Naive thymus-derived CD4-positive, alpha-beta T cell (primary cell): ENCODE measurements at regions of chr7 and their contacts with region 1.

Region 1: DNA sequence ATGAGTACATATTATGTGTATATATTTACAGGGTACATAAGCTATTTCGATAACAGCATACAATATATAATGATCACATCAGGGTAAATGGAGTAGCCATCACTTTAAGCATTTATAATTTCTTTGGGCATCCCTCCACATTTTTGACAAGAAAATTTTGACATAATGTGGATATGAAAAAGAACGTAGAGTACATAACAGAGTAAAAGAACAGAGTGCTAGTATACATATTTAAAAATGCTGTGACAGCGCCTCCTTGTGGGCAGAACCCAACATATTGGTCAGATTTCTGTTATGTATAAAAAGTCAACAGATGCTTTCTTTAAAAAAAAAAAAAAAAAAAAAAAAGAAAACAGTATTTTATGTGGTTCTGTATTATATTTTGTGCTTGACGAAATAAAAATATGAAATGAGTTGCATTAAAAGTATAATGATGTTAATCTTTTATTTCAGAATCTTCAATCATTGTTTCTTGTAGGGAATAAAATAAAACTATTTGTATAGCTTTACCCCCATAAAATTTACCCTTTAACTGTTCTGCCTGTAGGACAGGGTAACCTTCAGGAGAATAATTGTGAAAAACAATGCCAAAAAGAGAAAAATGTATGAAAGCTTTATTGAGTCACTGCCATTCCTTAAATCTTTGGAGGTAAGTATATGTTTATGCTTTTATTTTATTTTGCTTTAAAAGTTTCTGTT is 18.3 kb upstream of the HBP1 start:
- DNase-seq: peak; percentile 45 to 79 (median 72)
- ATAC-seq: peak; percentile 88
- H3K4me3 ChIP-seq: no peak overlapping the region
- H3K4me3 Mint-ChIP-seq: no peak overlapping the region
- H3K27ac ChIP-seq: no peak overlapping the region
- H3K27ac Mint-ChIP-seq: no peak overlapping the region
- H3K4me1 ChIP-seq: no peaks in the 10 kb centered on the region
- H3K4me1 Mint-ChIP-seq: peaks cover 0 to 12% (median 4%) of the 10 kb centered on the region in 7 donors
- H3K27me3 ChIP-seq: no peaks in the 10 kb centered on the region
- H3K27me3 Mint-ChIP-seq: peaks cover 0 to 7% (median 3%) of the 10 kb centered on the region in 5 donors

Region 2: GRCh38 chr7:106176414-106177299 is 973.9 kb before region 1 on chr7:
- CTCF ChIA-PET with region 1: no interaction called
- POLR2A ChIA-PET with region 1: no interaction called
- intact Hi-C with region 1: loop called (anchors 2 to 5 kb)
- DNase-seq: peak; percentile 24 to 73 (median 57)
- ATAC-seq: peak; percentile 92
- H3K4me3 ChIP-seq: no peak overlapping the region
- H3K4me3 Mint-ChIP-seq: no peak overlapping the region
- H3K27ac ChIP-seq: no peak overlapping the region
- H3K27ac Mint-ChIP-seq: no peak overlapping the region
- H3K4me1 ChIP-seq: no peaks in the 10 kb centered on the region
- H3K4me1 Mint-ChIP-seq: peaks cover 0 to 5% (median 0%) of the 10 kb centered on the region in 7 donors
- H3K27me3 ChIP-seq: peaks cover 0 to 7% of the 10 kb centered on the region in 2 donors
- H3K27me3 Mint-ChIP-seq: peaks cover 9 to 22% (median 19%) of the 10 kb centered on the region in 5 donors

Region 3: GRCh38 chr7:106947244-106947728 is 203.2 kb before region 1 on chr7:
- CTCF ChIA-PET with region 1: interaction called, 16 read pairs
- POLR2A ChIA-PET with region 1: interaction called, 3 read pairs
- intact Hi-C with region 1: loop called in 1 of 2 experiments (anchors 1 kb)
- DNase-seq: peak in 7 of 9 donors; percentile 9 to 45 (median 31)
- ATAC-seq: peak; percentile 69
- H3K4me3 ChIP-seq: no peak overlapping the region
- H3K4me3 Mint-ChIP-seq: no peak overlapping the region
- H3K27ac ChIP-seq: no peak overlapping the region
- H3K27ac Mint-ChIP-seq: no peak overlapping the region
- H3K4me1 ChIP-seq: no peaks in the 10 kb centered on the region
- H3K4me1 Mint-ChIP-seq: peaks cover 0 to 4% (median 0%) of the 10 kb centered on the region in 7 donors
- H3K27me3 ChIP-seq: no peaks in the 10 kb centered on the region
- H3K27me3 Mint-ChIP-seq: peaks cover 0 to 13% (median 4%) of the 10 kb centered on the region in 5 donors

Region 4: GRCh38 chr7:107130487-107131225 is 19.9 kb before region 1 on chr7:
- CTCF ChIA-PET with region 1: interaction called, 4 read pairs
- POLR2A ChIA-PET with region 1: interaction called, 3 read pairs
- intact Hi-C with region 1: loop called in 1 of 2 experiments (anchors 2 kb)
- DNase-seq: no peak
- ATAC-seq: no peak
- H3K4me3 ChIP-seq: no peak overlapping the region
- H3K4me3 Mint-ChIP-seq: no peak overlapping the region
- H3K27ac ChIP-seq: no peak overlapping the region
- H3K27ac Mint-ChIP-seq: no peak overlapping the region
- H3K4me1 ChIP-seq: peaks cover 3 to 12% of the 10 kb centered on the region in 2 donors
- H3K4me1 Mint-ChIP-seq: peaks cover 8 to 23% (median 18%) of the 10 kb centered on the region in 7 donors
- H3K27me3 ChIP-seq: no peaks in the 10 kb centered on the region
- H3K27me3 Mint-ChIP-seq: peaks cover 0 to 10% (median 0%) of the 10 kb centered on the region in 5 donors

Region 5: GRCh38 chr7:107958764-107959526 is 808.4 kb after region 1 on chr7:
- CTCF ChIA-PET with region 1: no interaction called
- POLR2A ChIA-PET with region 1: no interaction called
- intact Hi-C with region 1: no loop called
- DNase-seq: no peak
- ATAC-seq: no peak
- H3K4me3 ChIP-seq: no peak overlapping the region
- H3K4me3 Mint-ChIP-seq: no peak overlapping the region
- H3K27ac ChIP-seq: no peak overlapping the region
- H3K27ac Mint-ChIP-seq: no peak overlapping the region
- H3K4me1 ChIP-seq: no peaks in the 10 kb centered on the region
- H3K4me1 Mint-ChIP-seq: no peaks in the 10 kb centered on the region
- H3K27me3 ChIP-seq: no peaks in the 10 kb centered on the region
- H3K27me3 Mint-ChIP-seq: peaks cover 11 to 24% (median 15%) of the 10 kb centered on the region in 5 donors

Region 6: DNA sequence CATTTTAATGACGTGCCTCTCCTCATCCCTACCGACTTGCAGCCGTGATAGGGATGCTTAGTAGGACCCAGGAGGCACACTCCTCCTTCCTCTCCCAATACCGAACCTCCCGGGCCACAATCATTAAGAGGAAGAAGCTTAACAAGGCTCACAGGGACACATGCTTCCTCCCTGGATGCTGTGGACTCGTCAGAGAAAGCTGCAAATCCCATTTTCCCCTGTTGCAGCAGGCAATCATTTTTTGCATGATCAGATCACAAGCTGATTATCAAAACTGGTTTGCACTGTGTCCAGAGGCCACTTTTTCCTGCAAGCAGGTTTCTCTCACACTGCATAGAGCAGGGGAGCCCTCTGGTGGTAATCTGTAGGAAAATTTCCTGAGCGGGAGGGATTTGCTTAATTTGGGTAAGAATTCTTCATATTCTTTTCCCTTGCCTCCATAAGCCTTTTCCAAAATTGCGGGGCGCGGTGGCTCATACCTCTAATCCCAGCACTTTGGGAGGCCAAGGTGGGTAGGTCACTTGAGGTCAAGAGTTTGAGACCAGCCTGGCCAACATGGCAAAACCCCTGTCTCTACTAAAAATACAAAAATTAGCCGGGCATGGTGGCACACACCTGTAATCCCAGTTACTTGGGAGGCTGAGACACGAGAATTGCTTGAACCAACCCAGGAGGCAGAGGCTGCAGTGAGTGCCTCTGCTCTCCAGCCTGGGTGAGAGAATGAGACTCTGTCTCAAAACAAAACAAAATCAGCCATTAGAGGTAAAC is 995.7 kb after region 1 on chr7:
- CTCF ChIA-PET with region 1: no interaction called
- POLR2A ChIA-PET with region 1: no interaction called
- intact Hi-C with region 1: loop called (anchors 5 to 10 kb)
- DNase-seq: peak in 7 of 9 donors; percentile 12 to 52 (median 44)
- ATAC-seq: peak; percentile 67
- H3K4me3 ChIP-seq: no peak overlapping the region
- H3K4me3 Mint-ChIP-seq: no peak overlapping the region
- H3K27ac ChIP-seq: no peak overlapping the region
- H3K27ac Mint-ChIP-seq: no peak overlapping the region
- H3K4me1 ChIP-seq: no peaks in the 10 kb centered on the region
- H3K4me1 Mint-ChIP-seq: no peaks in the 10 kb centered on the region
- H3K27me3 ChIP-seq: no peaks in the 10 kb centered on the region
- H3K27me3 Mint-ChIP-seq: peaks cover 0 to 24% (median 9%) of the 10 kb centered on the region in 5 donors